Activated CD4-positive, alpha-beta memory T cell treated with anti-CD3 and anti-CD28 coated beads for 36 hours (primary cell): ENCODE measurements at regions of chr18 and their contacts with region 1.

Region 1: GRCh38 chr18:45935591-45936335 is 31.4 kb downstream of the EPG5 start:
- DNase-seq: no peak
- H3K4me3 Mint-ChIP-seq: no peak overlapping the region
- H3K27ac Mint-ChIP-seq: no peak overlapping the region
- H3K4me1 Mint-ChIP-seq: peaks cover 32% of the 10 kb centered on the region
- H3K27me3 Mint-ChIP-seq: no peaks in the 10 kb centered on the region

Region 2: DNA sequence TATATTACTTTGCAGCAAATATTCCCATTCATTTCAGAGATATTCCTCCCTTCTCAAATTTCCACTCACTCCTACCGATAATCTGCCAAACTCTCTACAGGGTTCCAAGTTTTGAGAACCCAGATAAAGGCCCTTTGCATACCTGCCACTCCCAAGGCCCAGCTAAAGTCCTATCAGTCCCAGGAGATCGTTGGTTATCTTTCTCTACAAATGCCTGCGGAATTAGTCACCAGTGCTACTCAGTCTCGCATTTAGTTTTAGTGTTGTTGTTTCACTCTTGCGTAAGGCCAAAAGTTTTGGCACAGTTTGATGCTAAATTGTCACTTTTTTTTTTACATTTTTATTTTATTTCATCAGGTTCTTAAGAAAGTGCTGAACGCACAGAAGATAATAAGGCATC is 1284.3 kb before region 1 on chr18:
- CTCF ChIA-PET with region 1: no interaction called
- POLR2A ChIA-PET with region 1: no interaction called
- intact Hi-C with region 1: no loop called
- DNase-seq: no peak
- H3K4me3 Mint-ChIP-seq: no peak overlapping the region
- H3K27ac Mint-ChIP-seq: no peak overlapping the region
- H3K4me1 Mint-ChIP-seq: no peaks in the 10 kb centered on the region
- H3K27me3 Mint-ChIP-seq: peaks cover 9% of the 10 kb centered on the region

Region 3: DNA sequence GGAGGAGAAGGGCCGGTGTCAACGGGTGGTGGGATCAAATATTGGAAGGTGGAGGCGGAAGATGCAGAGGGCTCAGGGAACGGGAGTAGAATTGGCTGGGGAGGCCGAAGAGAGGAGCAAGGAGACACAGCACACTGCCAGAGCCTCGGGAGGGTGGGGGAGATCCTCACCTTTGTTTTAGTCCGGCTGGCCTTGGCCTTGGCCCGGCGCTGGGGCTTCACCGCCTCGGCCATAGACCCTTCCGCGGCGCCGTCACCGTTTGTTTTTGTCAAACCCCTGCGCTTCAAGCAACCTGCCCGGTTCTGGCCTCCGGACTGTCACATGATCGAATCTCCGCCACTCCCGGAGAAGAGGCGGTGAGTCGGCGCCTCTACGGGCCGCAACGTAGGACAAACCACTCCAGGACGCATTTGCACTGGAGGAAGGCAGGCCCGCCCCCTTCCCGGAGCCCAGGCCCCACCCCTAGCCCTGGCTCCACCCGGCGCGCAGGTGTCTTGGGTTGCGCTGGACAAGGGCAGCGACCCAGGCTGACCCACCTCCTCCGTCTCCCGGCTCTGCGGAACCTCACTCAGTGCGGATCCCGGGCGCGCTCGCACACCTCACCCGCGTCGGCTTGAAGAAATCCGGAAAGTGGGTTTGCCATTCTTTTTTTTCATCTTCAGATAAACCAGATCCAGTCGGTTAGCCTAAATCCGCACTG is 31.4 kb after region 1 on chr18 and contains the start of gene EPG5:
- CTCF ChIA-PET with region 1: interaction called, 3 read pairs
- POLR2A ChIA-PET with region 1: no interaction called
- intact Hi-C with region 1: loop called (anchors 1 kb)
- DNase-seq: peak; percentile 97
- H3K4me3 Mint-ChIP-seq: peak within 1 kb of the TSS; percentile 93
- H3K27ac Mint-ChIP-seq: peak within 1 kb of the TSS; percentile 83
- H3K4me1 Mint-ChIP-seq: peaks cover 33% of the 10 kb centered on the region
- H3K27me3 Mint-ChIP-seq: no peaks in the 10 kb centered on the region
- total RNA-seq, gene EPG5: 18.8 to 21.4 TPM